ENCODE measurements at regions of chr12 and their contacts with region 1.

Region 1: GRCh38 chr12:129911428-129912049 is 7.7 kb upstream of the TMEM132D start:
- DNase-seq: peak; percentile 42
- ATAC-seq: peak; percentile 92
- H3K4me3 ChIP-seq: no peak overlapping the region
- H3K27ac ChIP-seq: no peak overlapping the region
- H3K4me1 ChIP-seq: no peaks in the 10 kb centered on the region
- H3K27me3 ChIP-seq: no peaks in the 10 kb centered on the region; the same call in 1 of the 2 replicates
- CTCF ChIP-seq: peak; percentile 89

Region 2: GRCh38 chr12:128047266-128048060 is 1864.1 kb before region 1 on chr12:
- CTCF ChIA-PET with region 1: interaction called, 14 read pairs
- POLR2A ChIA-PET with region 1: no interaction called
- in situ Hi-C with region 1: no loop called
- intact Hi-C with region 1: no loop called
- DNase-seq: no peak
- ATAC-seq: no peak
- H3K4me3 ChIP-seq: no peak overlapping the region
- H3K27ac ChIP-seq: no peak overlapping the region
- H3K4me1 ChIP-seq: no peaks in the 10 kb centered on the region
- H3K27me3 ChIP-seq: no peaks in the 10 kb centered on the region
- CTCF ChIP-seq: no peak

Region 3: GRCh38 chr12:128783129-128783574 is 1128.4 kb before region 1 on chr12:
- CTCF ChIA-PET with region 1: no interaction called
- POLR2A ChIA-PET with region 1: no interaction called
- in situ Hi-C with region 1: no loop called
- intact Hi-C with region 1: loop called (anchors 10 kb)
- DNase-seq: no peak
- ATAC-seq: no peak
- H3K4me3 ChIP-seq: no peak overlapping the region
- H3K27ac ChIP-seq: no peak overlapping the region
- H3K4me1 ChIP-seq: no peaks in the 10 kb centered on the region
- H3K27me3 ChIP-seq: no peaks in the 10 kb centered on the region
- CTCF ChIP-seq: no peak

Region 4: GRCh38 chr12:128969480-128970055 is 942.0 kb before region 1 on chr12:
- CTCF ChIA-PET with region 1: interaction called, 4 read pairs
- POLR2A ChIA-PET with region 1: no interaction called
- in situ Hi-C with region 1: no loop called
- intact Hi-C with region 1: loop called (anchors 1 kb)
- DNase-seq: no peak
- ATAC-seq: peak; percentile 97
- H3K4me3 ChIP-seq: no peak overlapping the region
- H3K27ac ChIP-seq: no peak overlapping the region
- H3K4me1 ChIP-seq: no peaks in the 10 kb centered on the region; the same call in 1 of the 2 replicates
- H3K27me3 ChIP-seq: peaks cover 6% of the 10 kb centered on the region; the same call in 1 of the 2 replicates
- CTCF ChIP-seq: peak; percentile 86

Region 5: DNA sequence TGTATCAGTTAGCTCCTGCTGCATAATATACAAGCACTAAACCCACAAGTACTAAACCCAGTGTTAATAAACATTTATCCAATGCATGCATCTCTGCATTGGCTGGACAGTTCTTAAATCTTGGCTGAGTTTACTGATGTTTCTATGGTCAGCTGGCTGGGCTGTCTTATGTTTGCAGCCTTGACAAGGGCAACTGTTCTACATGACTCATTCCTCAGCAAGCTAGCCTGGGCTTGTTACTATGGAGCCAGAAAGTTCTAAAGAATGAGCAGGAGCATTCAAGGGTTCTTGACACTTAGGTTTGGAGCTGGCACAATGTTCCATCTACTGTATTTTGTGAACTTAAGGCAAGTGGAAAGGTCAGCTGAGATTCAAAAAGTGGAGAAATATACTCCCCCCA is 859.2 kb before region 1 on chr12:
- CTCF ChIA-PET with region 1: no interaction called
- POLR2A ChIA-PET with region 1: no interaction called
- in situ Hi-C with region 1: no loop called
- intact Hi-C with region 1: no loop called
- DNase-seq: no peak
- ATAC-seq: no peak
- H3K4me3 ChIP-seq: no peak overlapping the region
- H3K27ac ChIP-seq: no peak overlapping the region
- H3K4me1 ChIP-seq: no peaks in the 10 kb centered on the region
- H3K27me3 ChIP-seq: no peaks in the 10 kb centered on the region
- CTCF ChIP-seq: no peak

Region 6: GRCh38 chr12:129193263-129193871 is 718.2 kb before region 1 on chr12:
- CTCF ChIA-PET with region 1: no interaction called
- POLR2A ChIA-PET with region 1: no interaction called
- in situ Hi-C with region 1: no loop called
- intact Hi-C with region 1: loop called (anchors 5 kb)
- DNase-seq: no peak
- ATAC-seq: no peak
- H3K4me3 ChIP-seq: no peak overlapping the region
- H3K27ac ChIP-seq: no peak overlapping the region
- H3K4me1 ChIP-seq: no peaks in the 10 kb centered on the region
- H3K27me3 ChIP-seq: no peaks in the 10 kb centered on the region
- CTCF ChIP-seq: peak; percentile 81

Region 7: DNA sequence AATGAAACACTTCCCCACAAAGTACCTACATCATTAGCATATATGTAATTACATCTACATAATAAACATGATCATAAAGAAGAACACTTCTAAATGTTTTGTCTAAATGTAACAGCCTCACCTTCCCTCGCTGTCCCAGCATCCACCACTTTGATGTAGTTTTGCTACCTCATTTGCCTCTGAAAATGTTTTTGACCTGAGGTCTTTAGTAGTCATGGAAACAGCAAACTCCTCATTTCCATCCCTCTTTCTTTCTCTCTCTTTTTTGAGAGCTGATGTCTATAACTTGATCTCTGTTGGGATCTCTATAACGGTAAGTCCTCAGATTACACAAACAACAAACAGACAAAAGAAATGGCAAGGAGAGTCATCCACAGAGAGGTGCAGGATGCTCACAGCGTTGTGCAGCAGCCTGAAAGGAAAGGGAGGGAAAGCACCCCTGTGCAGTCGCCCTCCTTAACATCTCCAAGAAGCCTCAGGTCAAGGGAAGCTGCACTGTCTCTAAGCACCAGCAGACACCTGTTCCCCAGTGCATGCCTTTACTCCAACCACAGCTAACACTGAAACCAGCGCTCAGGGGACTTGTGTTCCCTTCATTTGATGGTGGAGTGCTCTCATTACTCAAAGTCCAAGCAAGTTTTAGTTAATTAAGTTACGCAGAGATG is 276.4 kb before region 1 on chr12:
- CTCF ChIA-PET with region 1: no interaction called
- POLR2A ChIA-PET with region 1: no interaction called
- in situ Hi-C with region 1: no loop called
- intact Hi-C with region 1: no loop called
- DNase-seq: no peak
- ATAC-seq: no peak
- H3K4me3 ChIP-seq: no peak overlapping the region
- H3K27ac ChIP-seq: no peak overlapping the region
- H3K4me1 ChIP-seq: no peaks in the 10 kb centered on the region
- H3K27me3 ChIP-seq: no peaks in the 10 kb centered on the region
- CTCF ChIP-seq: no peak

Region 8: GRCh38 chr12:129941618-129942017 is 30.1 kb after region 1 on chr12:
- CTCF ChIA-PET with region 1: no interaction called
- POLR2A ChIA-PET with region 1: no interaction called
- in situ Hi-C with region 1: no loop called
- intact Hi-C with region 1: no loop called
- DNase-seq: no peak
- ATAC-seq: no peak
- H3K4me3 ChIP-seq: no peak overlapping the region
- H3K27ac ChIP-seq: no peak overlapping the region
- H3K4me1 ChIP-seq: no peaks in the 10 kb centered on the region
- H3K27me3 ChIP-seq: no peaks in the 10 kb centered on the region; the same call in 1 of the 2 replicates
- CTCF ChIP-seq: no peak

Region 9: GRCh38 chr12:130013771-130014484 is 102.4 kb after region 1 on chr12:
- CTCF ChIA-PET with region 1: no interaction called
- POLR2A ChIA-PET with region 1: no interaction called
- in situ Hi-C with region 1: no loop called
- intact Hi-C with region 1: loop called (anchors 5 kb)
- DNase-seq: peak; percentile 35
- ATAC-seq: peak; percentile 91
- H3K4me3 ChIP-seq: no peak overlapping the region
- H3K27ac ChIP-seq: no peak overlapping the region
- H3K4me1 ChIP-seq: no peaks in the 10 kb centered on the region
- H3K27me3 ChIP-seq: peaks cover 2% of the 10 kb centered on the region; the same call in 1 of the 2 replicates
- CTCF ChIP-seq: peak; percentile 89